Lower leg skin (tissue), 4 donors: ENCODE measurements at regions of chr3 and their contacts with region 1.

Region 1: GRCh38 chr3:21105784-21106183 is 645.2 kb downstream of the ZNF385D start:
- DNase-seq: no peak
- H3K4me3 ChIP-seq: no peak overlapping the region
- CTCF ChIP-seq: no peak
- POLR2A ChIP-seq: no peak

Region 2: GRCh38 chr3:21067031-21067813 is 38.6 kb before region 1 on chr3:
- intact Hi-C with region 1: no loop called
- DNase-seq: no peak
- H3K4me3 ChIP-seq: no peak overlapping the region
- CTCF ChIP-seq: no peak
- POLR2A ChIP-seq: no peak

Region 3: GRCh38 chr3:21132896-21133295 is 27.1 kb after region 1 on chr3:
- intact Hi-C with region 1: loop called (anchors 2 kb)
- DNase-seq: no peak
- H3K4me3 ChIP-seq: no peak overlapping the region
- CTCF ChIP-seq: no peak
- POLR2A ChIP-seq: no peak

Region 4: DNA sequence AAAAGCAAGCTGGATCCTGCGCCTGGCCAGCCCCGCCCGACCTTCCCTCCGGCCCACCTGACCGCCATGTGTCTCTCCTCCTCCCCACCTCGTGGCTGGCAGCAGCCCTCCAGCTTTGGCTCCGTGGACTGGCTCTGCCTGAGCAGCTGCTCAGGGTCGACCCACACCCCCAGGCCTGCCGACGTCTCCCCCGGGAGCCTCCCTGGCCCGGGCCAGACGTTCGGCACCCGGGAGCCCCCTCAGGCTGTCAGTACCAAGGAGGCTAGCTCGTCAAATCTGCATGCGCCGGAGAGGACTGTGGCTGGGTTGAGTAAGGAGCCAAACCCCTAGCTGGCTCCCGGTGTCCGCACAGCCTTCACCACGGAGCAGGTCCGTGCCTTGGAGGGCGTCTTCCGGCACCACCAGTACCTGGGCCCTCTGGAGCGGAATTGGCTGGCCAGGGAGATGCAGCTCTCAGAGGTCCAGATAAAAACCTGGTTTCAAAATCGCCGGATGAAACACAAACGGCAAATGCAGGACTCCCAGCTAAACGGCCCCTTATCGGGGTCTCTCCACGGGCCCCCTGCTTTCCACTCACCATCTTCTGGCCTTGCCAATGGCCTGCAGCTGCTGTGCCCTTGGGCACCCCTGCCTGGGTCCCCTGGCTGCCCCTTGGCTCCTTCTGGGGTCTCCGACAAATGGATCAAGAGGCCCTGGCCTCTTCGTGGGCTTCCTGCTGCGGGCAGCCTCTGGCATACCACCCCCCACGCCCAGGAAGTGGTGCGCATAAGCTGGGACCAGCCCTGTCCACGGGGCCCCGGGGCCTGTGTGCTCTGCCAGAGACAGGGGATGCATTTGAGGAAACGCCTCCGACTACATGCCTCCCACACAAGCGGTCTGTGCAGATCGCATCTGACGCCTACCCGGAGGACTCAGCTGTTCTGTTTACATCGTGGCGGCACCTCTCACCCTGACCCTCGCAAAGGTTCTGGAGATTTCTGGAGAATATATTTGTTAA is 300.2 kb after region 1 on chr3:
- intact Hi-C with region 1: no loop called
- DNase-seq: no peak
- H3K4me3 ChIP-seq: no peak overlapping the region
- CTCF ChIP-seq: no peak
- POLR2A ChIP-seq: no peak